CD14-positive monocyte (primary cell): ENCODE measurements at regions of chr2 and their contacts with region 1.

Region 1: GRCh38 chr2:219419331-219420197 is 1.4 kb downstream of the DES start:
- DNase-seq: peak in 2 of 3 donors; percentile 6 to 15
- H3K4me3 ChIP-seq: peak overlapping the region in 1 of 3 experiments; percentile 16
- H3K4me3 Mint-ChIP-seq: peak overlapping the region in 1 of 2 donors; percentile 80
- H3K27ac ChIP-seq: no peak overlapping the region
- H3K27ac Mint-ChIP-seq: peak overlapping the region in 3 of 7 donors; percentile 10 to 76 (median 19)
- H3K4me1 ChIP-seq: peaks cover 21 to 36% of the 10 kb centered on the region in 2 donors
- H3K4me1 Mint-ChIP-seq: peaks cover 27% of the 10 kb centered on the region
- H3K27me3 ChIP-seq: peaks cover 8 to 40% of the 10 kb centered on the region in 2 donors
- H3K27me3 Mint-ChIP-seq: peaks cover 43 to 61% (median 49%) of the 10 kb centered on the region in 3 donors
- CTCF ChIP-seq: no peak

Region 2: GRCh38 chr2:219530048-219530963 is 110.7 kb after region 1 on chr2:
- intact Hi-C with region 1: no loop called
- DNase-seq: peak; percentile 70 to 82 (median 78)
- H3K4me3 ChIP-seq: no peak overlapping the region
- H3K4me3 Mint-ChIP-seq: peak overlapping the region in 1 of 2 donors; percentile 65
- H3K27ac ChIP-seq: no peak overlapping the region
- H3K27ac Mint-ChIP-seq: peak overlapping the region in 1 of 7 donors; percentile 70
- H3K4me1 ChIP-seq: no peaks in the 10 kb centered on the region
- H3K4me1 Mint-ChIP-seq: no peaks in the 10 kb centered on the region
- H3K27me3 ChIP-seq: peaks cover 15 to 34% of the 10 kb centered on the region in 2 donors
- H3K27me3 Mint-ChIP-seq: peaks cover 51 to 60% (median 58%) of the 10 kb centered on the region in 3 donors
- CTCF ChIP-seq: peak; percentile 93

Region 3: DNA sequence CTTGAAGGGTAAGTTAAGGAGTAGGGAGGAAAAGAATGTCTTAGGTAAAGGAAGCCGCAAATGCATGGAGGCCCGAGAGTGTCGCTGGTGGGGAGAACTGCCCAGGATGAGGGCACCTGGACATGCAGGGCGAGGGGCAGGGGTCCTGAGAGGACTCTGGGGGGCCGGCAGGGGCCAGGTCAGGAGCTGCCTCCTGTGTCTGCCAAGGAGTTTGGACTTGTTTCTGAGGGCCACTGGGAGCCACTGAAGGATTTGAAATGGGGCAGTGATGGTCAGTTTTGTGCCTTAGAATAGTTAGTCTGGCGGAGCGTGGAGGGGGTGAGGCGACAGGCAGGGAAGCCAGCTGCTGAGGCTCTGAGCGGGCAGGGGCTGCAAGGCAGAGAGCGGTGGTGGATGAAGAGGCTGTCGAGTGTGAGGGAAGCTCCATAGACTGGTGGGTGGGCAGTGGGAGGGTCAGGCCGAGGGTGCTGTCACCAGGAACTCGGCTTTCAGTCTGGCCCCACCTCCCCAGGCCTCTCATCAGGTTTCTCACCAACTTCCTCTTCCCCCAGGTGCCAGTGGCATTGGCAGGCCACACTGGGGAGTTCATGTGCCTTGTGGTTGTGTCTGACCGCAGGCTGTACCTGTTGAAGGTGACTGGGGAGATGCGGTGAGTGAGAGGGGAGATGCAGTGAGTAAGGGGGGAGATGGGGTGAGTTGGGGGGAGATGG is 193.2 kb after region 1 on chr2:
- intact Hi-C with region 1: loop called in 1 of 2 experiments (anchors 10 kb)
- DNase-seq: no peak
- H3K4me3 ChIP-seq: no peak overlapping the region
- H3K4me3 Mint-ChIP-seq: no peak overlapping the region
- H3K27ac ChIP-seq: no peak overlapping the region
- H3K27ac Mint-ChIP-seq: peak overlapping the region in 1 of 7 donors; percentile 34
- H3K4me1 ChIP-seq: no peaks in the 10 kb centered on the region
- H3K4me1 Mint-ChIP-seq: peaks cover 5% of the 10 kb centered on the region
- H3K27me3 ChIP-seq: no peaks in the 10 kb centered on the region
- H3K27me3 Mint-ChIP-seq: peaks cover 0 to 4% (median 0%) of the 10 kb centered on the region in 3 donors
- CTCF ChIP-seq: no peak